ENCODE measurements at regions of chr10 and their contacts with region 1.

Region 1: GRCh38 chr10:62594093-62594520 is 210.4 kb upstream of the ADO start:
- DNase-seq: peak; percentile 35 to 75
- ATAC-seq: peak; percentile 67 to 95 (median 87)
- H3K4me3 ChIP-seq: no peak overlapping the region
- H3K4me3 Mint-ChIP-seq: no peak overlapping the region
- H3K27ac ChIP-seq: no peak overlapping the region
- H3K27ac Mint-ChIP-seq: no peak overlapping the region
- H3K4me1 ChIP-seq: no peaks in the 10 kb centered on the region
- H3K4me1 Mint-ChIP-seq: peaks cover 6% of the 10 kb centered on the region in 2 donors
- H3K27me3 ChIP-seq: no peaks in the 10 kb centered on the region
- H3K27me3 Mint-ChIP-seq: peaks cover 0 to 12% of the 10 kb centered on the region in 2 donors
- CTCF ChIP-seq: peak; percentile 92

Region 2: DNA sequence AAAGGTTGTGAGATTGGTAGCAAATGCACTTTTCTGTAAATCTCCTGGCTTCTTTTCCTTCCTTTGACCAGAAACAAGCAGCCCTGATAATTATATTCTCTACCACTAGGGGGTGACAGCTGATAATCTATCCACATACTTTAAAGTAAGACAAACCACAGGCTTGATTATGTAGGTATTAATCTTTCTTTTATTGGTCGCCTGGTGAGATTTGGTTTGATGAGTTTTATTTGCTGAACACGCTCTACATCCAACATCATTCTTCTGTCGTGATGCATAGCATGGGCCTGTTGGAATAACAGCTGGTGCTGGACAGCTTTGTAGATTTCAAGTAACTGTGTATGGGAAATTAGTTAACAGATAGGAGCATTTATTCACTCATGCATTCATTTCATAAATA is 156.4 kb before region 1 on chr10:
- intact Hi-C with region 1: loop called (anchors 5 kb)
- DNase-seq: peak in 1 of 2 donors; percentile 77
- ATAC-seq: peak; percentile 73 to 82 (median 76)
- H3K4me3 ChIP-seq: no peak overlapping the region
- H3K4me3 Mint-ChIP-seq: no peak overlapping the region
- H3K27ac ChIP-seq: no peak overlapping the region
- H3K27ac Mint-ChIP-seq: no peak overlapping the region
- H3K4me1 ChIP-seq: no peaks in the 10 kb centered on the region
- H3K4me1 Mint-ChIP-seq: peaks cover 5% of the 10 kb centered on the region in 2 donors
- H3K27me3 ChIP-seq: peaks cover 4% of the 10 kb centered on the region
- H3K27me3 Mint-ChIP-seq: peaks cover 4 to 11% of the 10 kb centered on the region in 2 donors
- CTCF ChIP-seq: peak; percentile 85

Region 3: GRCh38 chr10:62626817-62627216 is 32.7 kb after region 1 on chr10:
- intact Hi-C with region 1: no loop called
- DNase-seq: no peak
- ATAC-seq: no peak
- H3K4me3 ChIP-seq: no peak overlapping the region
- H3K4me3 Mint-ChIP-seq: no peak overlapping the region
- H3K27ac ChIP-seq: no peak overlapping the region
- H3K27ac Mint-ChIP-seq: peak overlapping the region in 1 of 2 donors; percentile 45
- H3K4me1 ChIP-seq: peaks cover 3% of the 10 kb centered on the region
- H3K4me1 Mint-ChIP-seq: peaks cover under 1 to 6% of the 10 kb centered on the region in 2 donors
- H3K27me3 ChIP-seq: no peaks in the 10 kb centered on the region
- H3K27me3 Mint-ChIP-seq: no peaks in the 10 kb centered on the region
- CTCF ChIP-seq: no peak

Region 4: GRCh38 chr10:63013755-63014154 is 419.6 kb after region 1 on chr10:
- intact Hi-C with region 1: loop called (anchors 10 kb)
- DNase-seq: no peak
- ATAC-seq: no peak
- H3K4me3 ChIP-seq: no peak overlapping the region
- H3K4me3 Mint-ChIP-seq: no peak overlapping the region
- H3K27ac ChIP-seq: no peak overlapping the region
- H3K27ac Mint-ChIP-seq: no peak overlapping the region
- H3K4me1 ChIP-seq: no peaks in the 10 kb centered on the region
- H3K4me1 Mint-ChIP-seq: no peaks in the 10 kb centered on the region
- H3K27me3 ChIP-seq: peaks cover 3% of the 10 kb centered on the region
- H3K27me3 Mint-ChIP-seq: peaks cover 8 to 37% of the 10 kb centered on the region in 2 donors
- CTCF ChIP-seq: no peak

Region 5: GRCh38 chr10:63027531-63027930 is 433.4 kb after region 1 on chr10:
- intact Hi-C with region 1: no loop called
- DNase-seq: no peak
- ATAC-seq: no peak
- H3K4me3 ChIP-seq: no peak overlapping the region
- H3K4me3 Mint-ChIP-seq: no peak overlapping the region
- H3K27ac ChIP-seq: no peak overlapping the region
- H3K27ac Mint-ChIP-seq: no peak overlapping the region
- H3K4me1 ChIP-seq: no peaks in the 10 kb centered on the region
- H3K4me1 Mint-ChIP-seq: no peaks in the 10 kb centered on the region
- H3K27me3 ChIP-seq: no peaks in the 10 kb centered on the region
- H3K27me3 Mint-ChIP-seq: peaks cover 10 to 26% of the 10 kb centered on the region in 2 donors
- CTCF ChIP-seq: no peak